Adrenal gland (tissue), 19 donors: ENCODE measurements at regions of chr6 and their contacts with region 1.

Region 1: GRCh38 chr6:48889429-48889828 is 573.6 kb downstream of the MMUT start:
- DNase-seq: no peak
- H3K4me3 ChIP-seq: no peak overlapping the region
- H3K27ac ChIP-seq: no peak overlapping the region
- H3K4me1 ChIP-seq: no peaks in the 10 kb centered on the region
- H3K27me3 ChIP-seq: no peaks in the 10 kb centered on the region
- CTCF ChIP-seq: no peak
- POLR2A ChIP-seq: no peak

Region 2: DNA sequence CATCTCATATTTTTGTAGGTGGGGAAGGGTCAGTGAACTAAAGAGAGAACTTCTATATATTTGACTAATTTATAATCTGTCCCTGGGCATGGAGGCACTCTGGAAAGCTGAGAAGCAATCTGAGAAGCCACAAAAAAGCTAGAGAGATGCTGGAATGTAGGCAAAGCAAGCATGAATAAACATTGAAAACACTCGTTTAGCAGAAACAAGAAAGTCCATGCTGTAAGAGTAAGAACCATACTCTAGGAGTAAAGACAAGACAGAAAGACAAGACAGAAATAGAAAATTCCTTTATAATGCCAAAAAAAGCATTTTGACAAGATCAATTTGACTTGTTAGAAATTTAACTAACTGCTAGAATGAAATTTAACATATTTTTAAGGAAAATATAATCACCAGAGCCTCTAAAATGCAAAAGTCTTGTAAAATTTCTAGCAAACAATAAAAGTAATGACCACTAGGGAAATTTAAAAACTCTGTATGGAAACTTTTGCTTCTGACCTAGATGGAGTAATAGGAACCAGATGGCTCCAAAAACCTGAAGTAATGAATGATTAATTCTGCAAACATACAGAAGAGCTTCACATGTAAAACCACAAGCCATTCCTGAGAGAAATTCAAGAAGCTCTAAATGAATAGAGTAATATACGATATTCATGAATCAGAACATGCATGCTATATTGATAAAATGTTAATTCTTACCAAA is 152.8 kb before region 1 on chr6:
- intact Hi-C with region 1: no loop called
- DNase-seq: no peak
- H3K4me3 ChIP-seq: no peak overlapping the region
- H3K27ac ChIP-seq: no peak overlapping the region
- H3K4me1 ChIP-seq: no peaks in the 10 kb centered on the region
- H3K27me3 ChIP-seq: no peaks in the 10 kb centered on the region
- CTCF ChIP-seq: no peak
- POLR2A ChIP-seq: no peak

Region 3: GRCh38 chr6:49001856-49002541 is 112.6 kb after region 1 on chr6:
- intact Hi-C with region 1: no loop called
- DNase-seq: peak in 5 of 7 donors; percentile 20 to 63 (median 26)
- H3K4me3 ChIP-seq: no peak overlapping the region
- H3K27ac ChIP-seq: no peak overlapping the region
- H3K4me1 ChIP-seq: no peaks in the 10 kb centered on the region
- H3K27me3 ChIP-seq: no peaks in the 10 kb centered on the region
- CTCF ChIP-seq: no peak
- POLR2A ChIP-seq: no peak

Region 4: GRCh38 chr6:49110916-49111315 is 221.5 kb after region 1 on chr6:
- intact Hi-C with region 1: loop called in 1 of 2 experiments (anchors 5 kb)
- DNase-seq: no peak
- H3K4me3 ChIP-seq: no peak overlapping the region
- H3K27ac ChIP-seq: no peak overlapping the region
- H3K4me1 ChIP-seq: no peaks in the 10 kb centered on the region
- H3K27me3 ChIP-seq: no peaks in the 10 kb centered on the region
- CTCF ChIP-seq: no peak
- POLR2A ChIP-seq: no peak